ENCODE measurements at regions of chr13 and their contacts with region 1.

Region 1: GRCh38 chr13:50529154-50529882 is 314.2 kb downstream of the DLEU7 start:
- DNase-seq: peak; percentile 92
- H3K4me3 ChIP-seq: peak overlapping the region; percentile 47
- H3K27ac ChIP-seq: peak overlapping the region; percentile 86
- H3K4me1 ChIP-seq: peaks cover 31% of the 10 kb centered on the region
- H3K27me3 ChIP-seq: no peaks in the 10 kb centered on the region

Region 2: GRCh38 chr13:49996951-49997895 is 532.1 kb before region 1 on chr13 and contains the start of gene TRIM13:
- in situ Hi-C with region 1: loop called (anchors 25 kb)
- DNase-seq: peak; percentile 96
- H3K4me3 ChIP-seq: peak within 1 kb of the TSS; percentile 93
- H3K27ac ChIP-seq: peak within 1 kb of the TSS; percentile 95
- H3K4me1 ChIP-seq: peaks cover 23% of the 10 kb centered on the region
- H3K27me3 ChIP-seq: no peaks in the 10 kb centered on the region
- total RNA-seq, gene TRIM13: 20.2 and 22.3 TPM in 2 replicates

Region 3: DNA sequence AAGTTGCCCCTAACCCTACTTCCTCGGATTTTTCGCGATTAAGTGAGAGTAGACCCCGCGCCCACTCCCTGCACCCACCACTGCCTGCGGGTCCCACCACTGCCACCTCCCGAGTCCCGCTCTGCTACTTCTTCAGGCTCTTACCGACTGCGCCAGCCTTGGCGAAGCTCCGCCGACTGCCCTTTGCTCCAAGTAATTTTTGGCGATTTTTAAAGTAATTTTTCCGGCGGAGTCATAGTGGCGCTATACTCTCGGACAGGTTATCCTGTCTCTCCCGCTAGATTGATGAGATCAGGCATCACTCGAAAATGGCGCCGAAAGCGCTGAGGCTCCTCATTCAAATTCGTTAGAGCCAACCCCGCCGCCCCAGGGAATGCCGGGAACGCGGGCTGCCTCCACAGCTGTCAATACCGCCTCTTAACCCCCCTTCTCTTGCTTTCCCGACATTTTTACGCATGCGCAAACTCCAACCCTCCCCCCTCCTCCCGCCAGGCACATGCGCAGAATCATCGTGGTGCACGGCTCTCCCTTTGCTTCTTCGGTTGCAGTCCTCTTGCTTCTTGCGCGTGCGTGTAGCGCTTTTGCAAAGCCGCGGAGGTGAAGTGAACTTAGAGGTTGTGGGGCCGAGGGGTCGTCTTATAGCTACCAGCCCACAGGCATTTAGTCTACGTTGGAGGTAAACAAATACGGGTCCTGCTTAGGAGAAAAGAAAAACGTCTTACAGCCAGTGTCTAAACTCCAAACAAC is 447.5 kb before region 1 on chr13:
- in situ Hi-C with region 1: loop called (anchors 25 kb)
- DNase-seq: peak; percentile 99
- H3K4me3 ChIP-seq: peak overlapping the region; percentile 78
- H3K27ac ChIP-seq: peak overlapping the region; percentile 81
- H3K4me1 ChIP-seq: peaks cover 32% of the 10 kb centered on the region
- H3K27me3 ChIP-seq: no peaks in the 10 kb centered on the region